Activated CD4-positive, alpha-beta T cell treated with anti-CD3 and anti-CD28 coated beads, Interleukin-2, amount 10 ng/mL, durations not matched to agents 24 days and 14 days (primary cell): ENCODE measurements at regions of chr1 and their contacts with region 1.

Region 1: GRCh38 chr1:15847100-15847892 is at the start of gene SPEN:
- DNase-seq: peak; percentile 100
- H3K4me3 Mint-ChIP-seq: peak within 1 kb of the TSS; percentile 95
- H3K27ac Mint-ChIP-seq: peak within 1 kb of the TSS; percentile 96
- H3K4me1 Mint-ChIP-seq: peaks cover 42% of the 10 kb centered on the region
- H3K27me3 Mint-ChIP-seq: no peaks in the 10 kb centered on the region
- total RNA-seq, gene SPEN: 89.1 and 94.1 TPM in 2 replicates

Region 2: DNA sequence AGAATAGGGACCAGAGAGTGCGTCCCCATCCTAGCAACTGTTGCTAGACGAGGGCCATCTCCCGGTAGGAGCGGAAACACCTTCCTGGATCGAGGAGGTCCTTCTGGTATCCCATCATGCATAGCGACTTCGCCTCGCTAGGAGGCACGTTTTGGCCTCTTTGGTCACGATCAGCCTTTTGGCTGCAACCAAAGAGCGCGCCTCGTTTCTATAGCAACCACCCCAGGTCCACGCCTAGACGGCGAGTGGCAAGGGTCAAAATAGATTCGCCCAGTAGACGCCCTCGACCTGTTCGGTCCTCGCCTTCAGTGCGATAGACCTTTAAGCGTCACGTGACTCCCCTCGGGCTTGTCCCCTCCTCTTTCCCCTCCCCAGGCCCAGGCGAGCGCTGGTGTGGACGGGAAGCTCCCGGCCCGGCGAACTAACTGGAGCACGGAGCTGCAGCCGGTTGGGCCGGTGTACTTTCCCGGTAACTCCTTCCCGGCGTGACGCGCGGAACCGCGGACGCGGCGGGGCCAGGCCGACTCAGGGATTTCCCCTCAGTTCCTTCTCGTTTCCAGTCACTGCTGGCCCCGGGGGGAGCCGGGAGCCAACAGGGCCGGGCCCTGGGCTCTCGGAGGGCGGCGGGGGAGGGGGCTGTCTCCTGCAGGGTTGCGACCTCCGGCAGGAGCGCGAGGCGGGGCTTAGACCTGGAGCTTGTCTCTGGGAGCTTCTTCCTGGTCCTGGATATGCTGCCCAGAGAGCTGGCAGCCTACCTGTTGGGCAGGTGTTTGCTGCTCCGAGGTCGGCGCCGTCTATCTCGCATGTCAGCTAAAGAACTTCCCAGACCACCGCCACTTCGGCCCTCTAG is 320.6 kb before region 1 on chr1 and contains the start of gene DNAJC16:
- intact Hi-C with region 1: loop called (anchors 5 kb)
- DNase-seq: peak; percentile 99
- H3K4me3 Mint-ChIP-seq: peak within 1 kb of the TSS; percentile 99
- H3K27ac Mint-ChIP-seq: peak within 1 kb of the TSS; percentile 100
- H3K4me1 Mint-ChIP-seq: peaks cover 43% of the 10 kb centered on the region
- H3K27me3 Mint-ChIP-seq: no peaks in the 10 kb centered on the region
- total RNA-seq, gene DNAJC16: 15.4 and 16.3 TPM in 2 replicates

Region 3: GRCh38 chr1:15835741-15836510 is 11.4 kb before region 1 on chr1:
- intact Hi-C with region 1: loop called (anchors 1 kb)
- DNase-seq: peak; percentile 100
- H3K4me3 Mint-ChIP-seq: peak overlapping the region; percentile 95
- H3K27ac Mint-ChIP-seq: peak overlapping the region; percentile 99
- H3K4me1 Mint-ChIP-seq: peaks cover 29% of the 10 kb centered on the region
- H3K27me3 Mint-ChIP-seq: peaks cover 2% of the 10 kb centered on the region

Region 4: GRCh38 chr1:15918962-15919715 is 71.8 kb after region 1 on chr1:
- intact Hi-C with region 1: loop called (anchors 1 kb)
- DNase-seq: peak; percentile 88
- H3K4me3 Mint-ChIP-seq: peak overlapping the region; percentile 66
- H3K27ac Mint-ChIP-seq: peak overlapping the region; percentile 72
- H3K4me1 Mint-ChIP-seq: peaks cover 35% of the 10 kb centered on the region
- H3K27me3 Mint-ChIP-seq: no peaks in the 10 kb centered on the region

Region 5: GRCh38 chr1:15966081-15966955 is 119.0 kb after region 1 on chr1:
- intact Hi-C with region 1: loop called (anchors 1 kb)
- DNase-seq: peak; percentile 89
- H3K4me3 Mint-ChIP-seq: peak overlapping the region; percentile 87
- H3K27ac Mint-ChIP-seq: peak overlapping the region; percentile 100
- H3K4me1 Mint-ChIP-seq: peaks cover 65% of the 10 kb centered on the region
- H3K27me3 Mint-ChIP-seq: no peaks in the 10 kb centered on the region